A549 (cell line): ENCODE measurements at regions of chr5 and their contacts with region 1.

Region 1: DNA sequence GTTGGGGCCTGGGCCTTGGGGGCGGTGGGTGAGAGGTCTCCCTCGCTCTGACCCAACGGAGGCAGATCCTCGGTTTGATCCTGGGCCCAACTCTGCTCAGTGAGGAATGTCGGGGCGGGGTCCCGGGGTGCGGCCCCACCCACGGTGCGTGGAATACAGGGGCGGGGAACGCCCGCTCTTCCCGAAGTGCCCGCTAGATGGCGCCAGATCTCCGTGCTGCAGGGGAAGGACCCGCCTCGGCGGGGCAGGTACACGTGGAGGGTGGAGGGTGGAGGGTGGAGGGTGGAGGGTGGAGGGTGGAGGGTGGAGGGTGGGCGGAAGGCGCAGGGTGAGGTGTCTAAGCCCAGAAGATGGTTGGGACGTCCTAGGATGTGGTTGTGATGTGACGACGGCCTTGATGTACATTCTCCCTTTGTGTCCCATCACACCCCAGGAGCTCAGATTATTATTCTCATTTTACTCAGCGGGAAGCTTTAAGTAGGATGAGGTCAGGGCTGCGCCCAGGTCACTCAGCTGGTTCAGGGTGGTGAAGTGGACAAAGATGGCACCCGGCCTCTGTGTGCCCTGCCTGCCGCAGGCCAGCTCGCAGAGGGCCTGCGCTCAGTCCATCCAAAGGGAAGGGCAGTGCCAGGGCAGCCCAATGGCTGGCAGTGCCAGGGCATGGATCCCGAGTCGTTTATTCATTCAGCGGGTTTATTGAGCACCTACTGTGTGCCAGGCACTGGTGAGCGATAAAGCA is 9.4 kb upstream of the RPS14 start:
- DNase-seq: peak; percentile 72 to 81
- ATAC-seq: peak; percentile 88 to 94
- H3K4me3 ChIP-seq: peak overlapping the region; percentile 31; the same call in 2 of the 3 replicates
- H3K27ac ChIP-seq: peak overlapping the region; percentile 79 to 85
- H3K4me1 ChIP-seq: peaks cover 35% of the 10 kb centered on the region
- CTCF ChIP-seq: peak; percentile 86
- EP300 ChIP-seq: no peak
- POLR2A ChIP-seq: no peak
- RAD21 ChIP-seq: peak; percentile 89 to 99

Region 2: GRCh38 chr5:150163547-150164059 is 295.4 kb before region 1 on chr5:
- CTCF ChIA-PET with region 1: no interaction called
- POLR2A ChIA-PET with region 1: no interaction called
- DNase-seq: no peak
- ATAC-seq: no peak
- H3K4me3 ChIP-seq: no peak overlapping the region
- H3K27ac ChIP-seq: peak overlapping the region in 1 of 2 experiments; percentile 61; a peak in 2 of 6 replicates
- H3K4me1 ChIP-seq: peaks cover 8% of the 10 kb centered on the region; the same call in 1 of the 3 replicates
- CTCF ChIP-seq: no peak
- EP300 ChIP-seq: no peak
- POLR2A ChIP-seq: no peak
- RAD21 ChIP-seq: no peak

Region 3: DNA sequence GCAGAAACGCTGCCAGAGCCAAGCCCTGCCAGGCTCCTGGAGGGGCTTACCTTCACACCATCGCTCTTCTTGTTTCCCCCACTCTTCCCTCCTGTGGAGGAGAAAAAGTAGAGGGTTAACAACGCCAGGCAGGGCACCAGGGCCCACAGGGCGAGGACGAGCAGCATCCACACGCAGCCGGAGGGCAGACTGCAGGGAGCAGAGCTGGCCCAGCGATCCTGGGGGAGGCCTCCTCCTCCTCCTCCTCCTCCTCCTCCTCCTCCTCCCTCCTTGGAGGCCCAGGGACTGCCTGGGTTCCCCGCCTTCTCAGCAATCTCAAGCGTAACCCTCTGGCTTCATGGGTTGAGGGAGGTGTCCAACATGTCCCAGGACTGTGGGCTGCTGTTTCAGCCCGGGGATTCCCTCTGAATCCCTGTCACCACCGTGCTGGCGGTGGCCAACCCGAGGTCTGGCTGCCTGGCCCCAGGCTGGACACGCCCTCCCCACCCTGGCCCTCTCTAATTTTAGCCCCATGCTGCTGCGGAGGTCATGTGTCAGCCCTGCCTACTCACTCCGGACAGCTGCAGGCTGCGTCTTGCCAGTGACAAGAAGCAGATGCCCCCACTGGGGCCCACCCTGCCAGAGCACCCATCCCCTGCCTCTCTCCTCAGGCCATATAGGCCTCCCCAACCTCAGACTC is 213.7 kb before region 1 on chr5:
- CTCF ChIA-PET with region 1: no interaction called
- POLR2A ChIA-PET with region 1: no interaction called
- DNase-seq: no peak
- ATAC-seq: no peak
- H3K4me3 ChIP-seq: no peak overlapping the region
- H3K27ac ChIP-seq: no peak overlapping the region
- H3K4me1 ChIP-seq: no peaks in the 10 kb centered on the region
- CTCF ChIP-seq: no peak
- EP300 ChIP-seq: no peak
- POLR2A ChIP-seq: no peak
- RAD21 ChIP-seq: no peak

Region 4: GRCh38 chr5:150473673-150474358 is 14.8 kb after region 1 on chr5:
- CTCF ChIA-PET with region 1: interaction called, 16 read pairs
- POLR2A ChIA-PET with region 1: no interaction called
- DNase-seq: peak in 1 of 2 experiments; percentile 90
- ATAC-seq: peak; percentile 72 to 83
- H3K4me3 ChIP-seq: no peak overlapping the region
- H3K27ac ChIP-seq: peak overlapping the region; percentile 86 to 96
- H3K4me1 ChIP-seq: peaks cover 58% of the 10 kb centered on the region
- CTCF ChIP-seq: no peak
- EP300 ChIP-seq: 0 out of 5 replicates have a peak, but pooled peaks of 1 of the 2 experiments have one; percentile 67
- POLR2A ChIP-seq: no peak
- RAD21 ChIP-seq: peak in 1 of 2 experiments; percentile 41; a peak in 1 of 5 replicates

Region 5: DNA sequence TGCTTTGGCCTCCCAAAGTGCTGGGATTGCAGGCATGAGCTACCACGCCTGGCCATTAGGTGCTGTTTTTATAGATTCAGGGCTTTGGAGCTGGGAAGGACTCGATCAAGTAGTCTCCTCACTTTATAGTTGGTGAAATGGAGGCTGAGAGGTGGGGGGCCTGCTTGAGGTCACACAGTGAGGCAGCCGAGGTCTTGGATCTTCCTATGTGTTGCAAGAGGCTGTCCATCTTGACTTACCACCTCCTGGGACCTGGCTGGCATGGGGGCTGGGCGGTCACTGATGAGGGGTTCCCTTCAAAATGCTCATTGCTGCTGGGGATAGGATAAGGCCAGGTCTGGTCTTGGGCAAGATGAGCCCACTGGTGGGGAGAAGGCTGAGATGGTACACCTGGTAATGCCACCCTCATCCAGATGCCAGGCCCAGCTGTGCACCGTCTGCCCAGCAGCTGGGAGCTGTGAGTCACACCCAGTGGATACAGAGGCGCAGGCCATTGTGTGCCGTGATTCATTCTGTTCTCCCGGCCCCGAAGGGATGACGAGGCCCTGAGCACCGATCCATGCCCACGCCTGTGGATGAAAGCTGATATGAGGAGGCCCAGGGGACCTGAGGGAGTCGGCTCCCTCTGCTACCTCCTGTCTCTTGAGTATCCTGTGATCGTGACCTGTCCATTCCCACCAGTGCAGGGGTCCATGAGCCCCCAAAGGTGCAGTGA is 38.4 kb after region 1 on chr5:
- CTCF ChIA-PET with region 1: interaction called, 26 read pairs
- POLR2A ChIA-PET with region 1: no interaction called
- DNase-seq: peak; percentile 88 to 99
- ATAC-seq: peak; percentile 97 to 98
- H3K4me3 ChIP-seq: peak overlapping the region; percentile 29
- H3K27ac ChIP-seq: peak overlapping the region; percentile 88 to 90
- H3K4me1 ChIP-seq: peaks cover 79% of the 10 kb centered on the region
- CTCF ChIP-seq: no peak
- EP300 ChIP-seq: no peak
- POLR2A ChIP-seq: no peak
- RAD21 ChIP-seq: 0 out of 5 replicates have a peak, but pooled peaks of 1 of the 2 experiments have one; percentile 15

Region 6: DNA sequence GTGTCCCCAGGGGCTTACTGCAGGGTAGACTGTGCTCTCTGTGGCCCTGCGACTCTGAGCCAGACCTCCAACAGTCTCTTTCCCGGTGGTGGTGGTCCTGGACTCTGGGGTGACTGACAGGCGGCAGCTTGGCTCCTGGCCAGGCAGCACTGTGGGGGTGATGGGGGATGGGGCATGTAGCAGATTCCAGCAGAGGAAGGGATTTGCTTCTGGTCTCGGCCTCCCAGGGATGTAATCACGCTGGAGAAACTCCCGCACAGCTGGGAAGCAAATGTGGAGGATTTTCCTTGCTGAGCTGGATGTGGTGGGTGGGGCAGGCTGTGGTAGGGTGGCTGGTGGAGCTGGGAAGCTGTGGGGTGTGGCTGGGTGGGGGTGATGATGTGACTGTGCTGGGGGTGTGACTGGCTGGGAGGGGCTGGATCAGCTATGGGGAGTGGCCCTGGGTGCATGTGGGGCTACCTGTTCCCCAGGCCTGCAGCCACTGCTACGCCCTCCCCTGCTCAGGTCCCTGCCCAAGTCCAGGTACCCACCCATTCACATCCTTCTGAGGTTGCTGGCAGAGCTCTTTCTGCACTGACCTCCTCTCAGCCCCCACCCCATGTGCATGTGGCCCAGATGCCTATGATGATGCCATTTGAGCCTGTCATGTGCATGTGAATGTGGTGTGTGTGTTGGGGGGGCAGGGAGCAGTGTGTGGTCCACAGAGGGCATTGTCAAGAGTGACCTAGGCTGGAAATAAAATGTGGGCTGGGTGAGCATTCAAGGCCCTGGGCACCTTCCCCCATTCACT is 52.8 kb after region 1 on chr5:
- CTCF ChIA-PET with region 1: interaction called, 14 read pairs
- POLR2A ChIA-PET with region 1: no interaction called
- DNase-seq: peak; percentile 58 to 75
- ATAC-seq: peak; percentile 51 to 58
- H3K4me3 ChIP-seq: no peak overlapping the region
- H3K27ac ChIP-seq: peak overlapping the region; percentile 71 to 92
- H3K4me1 ChIP-seq: peaks cover 96% of the 10 kb centered on the region
- CTCF ChIP-seq: no peak
- EP300 ChIP-seq: no peak
- POLR2A ChIP-seq: no peak
- RAD21 ChIP-seq: no peak

Region 7: DNA sequence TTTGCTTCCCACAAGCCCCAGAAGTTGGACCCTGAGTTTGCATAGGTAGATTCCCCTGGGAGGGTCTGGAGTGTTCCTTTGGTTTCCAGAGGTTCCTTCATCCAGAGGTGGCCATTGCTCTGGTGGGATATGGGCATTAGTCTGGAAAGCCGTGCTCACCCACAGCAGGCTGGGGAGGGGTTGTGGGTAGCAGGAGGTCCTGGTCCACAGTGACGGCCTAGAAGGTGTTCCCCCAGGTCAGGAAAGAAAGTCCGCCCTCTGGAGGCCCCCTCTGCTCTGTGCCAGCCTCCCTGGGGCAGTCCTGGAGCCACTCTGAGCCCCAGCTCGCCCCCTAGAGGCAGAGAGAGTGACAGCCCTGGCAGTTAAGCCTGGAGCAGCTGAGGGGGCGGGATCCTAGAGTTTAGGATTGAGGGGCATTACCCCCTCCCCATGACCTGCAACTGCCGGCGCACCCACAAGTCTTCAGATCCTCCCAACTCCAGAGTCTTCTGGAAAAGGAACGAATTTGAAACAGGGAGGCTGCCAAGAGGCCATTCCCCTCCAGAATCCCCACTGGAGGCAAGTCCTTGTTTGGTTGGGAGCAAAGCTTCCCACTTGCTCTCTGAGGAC is 85.7 kb after region 1 on chr5:
- CTCF ChIA-PET with region 1: interaction called, 157 read pairs
- POLR2A ChIA-PET with region 1: no interaction called
- DNase-seq: peak; percentile 68 to 96
- ATAC-seq: peak; percentile 88 to 94
- H3K4me3 ChIP-seq: no peak overlapping the region
- H3K27ac ChIP-seq: peak overlapping the region in 1 of 2 experiments; percentile 27; a peak in 2 of 6 replicates
- H3K4me1 ChIP-seq: peaks cover 25% of the 10 kb centered on the region
- CTCF ChIP-seq: peak; percentile 82
- EP300 ChIP-seq: no peak
- POLR2A ChIP-seq: no peak
- RAD21 ChIP-seq: peak; percentile 77 to 78

Region 8: DNA sequence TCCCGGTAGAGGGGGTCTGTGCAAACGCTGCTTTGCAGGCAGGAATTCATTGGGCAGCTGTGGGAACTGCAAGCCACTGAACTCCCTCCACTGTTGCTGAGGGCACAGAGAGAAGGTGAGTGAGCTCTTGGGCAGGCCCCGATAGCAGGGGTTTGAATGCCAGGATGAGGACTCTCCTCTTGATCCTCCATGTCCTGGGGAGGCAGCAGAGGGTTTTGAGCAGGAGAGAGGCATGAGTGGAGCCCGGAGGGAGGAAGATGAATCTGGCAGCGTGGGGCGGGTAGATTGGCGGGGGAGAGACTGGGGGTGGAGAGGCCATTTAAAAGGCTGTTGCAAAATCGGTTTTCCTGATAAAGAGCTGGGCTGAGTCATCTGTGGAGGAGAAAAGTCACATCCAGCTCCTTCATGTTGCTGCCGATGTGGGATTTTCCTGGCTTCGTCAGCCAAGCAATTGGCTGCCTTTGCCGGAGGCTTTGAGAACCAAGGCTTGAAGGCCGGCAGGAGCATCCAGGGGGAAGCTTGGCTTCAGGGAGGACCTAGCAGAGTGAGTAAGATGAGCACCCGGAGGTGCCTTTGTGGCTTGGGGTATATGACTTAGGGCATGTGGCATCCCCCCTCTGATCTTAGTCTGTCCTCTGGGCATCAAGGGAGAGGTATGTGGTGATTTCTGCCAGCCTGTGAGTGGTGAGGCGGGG is 181.5 kb after region 1 on chr5 and contains the start of gene SYNPO:
- CTCF ChIA-PET with region 1: interaction called, 13 read pairs
- POLR2A ChIA-PET with region 1: no interaction called
- DNase-seq: peak; percentile 80 to 84
- ATAC-seq: peak; percentile 36 to 42
- H3K4me3 ChIP-seq: peak within 1 kb of the TSS; percentile 54
- H3K27ac ChIP-seq: peak within 1 kb of the TSS; percentile 95 to 96
- H3K4me1 ChIP-seq: peaks cover 88% of the 10 kb centered on the region
- CTCF ChIP-seq: no peak
- EP300 ChIP-seq: peak; percentile 39 to 40; a peak in 2 of 5 replicates
- POLR2A ChIP-seq: no peak; the same call in 1 of the 2 replicates
- RAD21 ChIP-seq: no peak; a peak in 1 of 5 replicates
- polyA plus RNA-seq, gene SYNPO: 13.7 and 20.7 TPM in 2 replicates

Region 9: GRCh38 chr5:150778517-150779396 is 319.8 kb after region 1 on chr5 and contains the start of gene SMIM3:
- CTCF ChIA-PET with region 1: interaction called, 11 read pairs
- POLR2A ChIA-PET with region 1: no interaction called
- DNase-seq: peak; percentile 55 to 58
- ATAC-seq: peak; percentile 91 to 94
- H3K4me3 ChIP-seq: peak within 1 kb of the TSS; percentile 81
- H3K27ac ChIP-seq: peak within 1 kb of the TSS; percentile 78 to 86
- H3K4me1 ChIP-seq: peaks cover 9% of the 10 kb centered on the region
- CTCF ChIP-seq: peak; percentile 54
- EP300 ChIP-seq: no peak
- POLR2A ChIP-seq: peak; percentile 33; the same call in 1 of the 2 replicates
- RAD21 ChIP-seq: peak; percentile 64 to 66
- polyA plus RNA-seq, gene SMIM3: 4.5 and 4.9 TPM in 2 replicates